AG04449 (cell line): ENCODE measurements at regions of chr9 and their contacts with region 1.

Region 1: DNA sequence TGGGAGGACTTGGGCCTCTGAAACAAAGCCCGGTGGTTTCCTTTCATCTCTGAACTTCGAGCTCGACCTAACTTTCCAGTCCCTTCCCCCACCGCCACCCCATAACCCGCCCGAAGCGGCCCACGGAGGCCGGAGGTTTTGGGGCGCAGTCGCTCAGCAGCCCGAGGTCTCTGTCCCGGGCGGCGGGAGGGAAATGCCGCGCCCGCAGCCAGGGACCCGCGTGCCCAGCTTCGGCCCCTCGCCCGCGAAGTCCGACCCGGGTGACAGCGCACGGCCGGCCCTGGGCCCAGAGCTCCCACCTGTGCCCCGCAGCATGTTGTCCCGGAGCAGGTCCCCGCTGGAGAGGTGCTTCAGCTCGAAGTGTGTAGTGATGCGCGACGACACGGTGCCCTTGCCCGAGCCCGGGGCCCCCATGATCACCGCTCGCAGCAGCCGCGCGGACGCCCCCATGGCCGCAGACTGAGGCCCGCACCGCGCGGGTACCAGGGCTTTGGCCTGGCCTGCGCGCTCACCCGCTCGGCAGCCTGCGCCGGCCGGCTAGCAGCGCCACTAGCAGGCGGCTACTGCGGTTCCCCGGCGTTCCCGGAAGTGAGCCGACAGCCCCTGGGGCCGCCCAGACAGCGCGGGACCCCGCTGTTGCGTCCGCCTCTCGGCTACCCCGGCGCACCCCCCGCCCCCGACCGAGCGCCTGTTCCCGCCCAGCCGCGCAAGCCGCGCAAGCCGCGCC is at the start of gene AK3:
- DNase-seq: peak; percentile 17
- H3K4me3 ChIP-seq: peak within 1 kb of the TSS; percentile 82
- CTCF ChIP-seq: peak; percentile 57

Region 2: DNA sequence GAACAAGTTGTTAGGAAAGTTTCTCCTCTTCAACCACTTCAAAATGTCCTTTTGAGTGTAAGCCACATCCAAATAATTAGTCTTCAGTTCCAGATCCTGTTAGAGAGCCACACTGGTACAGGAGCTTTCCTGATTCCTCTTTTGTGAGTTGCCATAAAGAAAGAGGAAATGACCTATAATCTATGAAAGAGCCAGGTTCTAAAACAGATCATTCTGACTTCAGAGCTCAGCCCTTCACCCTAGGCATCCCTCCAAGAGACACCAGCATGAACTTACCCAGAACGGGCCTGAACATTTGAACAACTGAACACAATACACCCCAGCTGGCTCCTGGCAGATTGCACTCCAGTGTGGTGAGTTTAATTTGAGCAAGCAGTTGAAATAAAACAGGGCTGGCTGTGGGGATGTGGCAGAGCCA is 224.8 kb before region 1 on chr9:
- CTCF ChIA-PET with region 1: no interaction called
- POLR2A ChIA-PET with region 1: no interaction called
- DNase-seq: no peak
- H3K4me3 ChIP-seq: no peak overlapping the region
- CTCF ChIP-seq: no peak

Region 3: DNA sequence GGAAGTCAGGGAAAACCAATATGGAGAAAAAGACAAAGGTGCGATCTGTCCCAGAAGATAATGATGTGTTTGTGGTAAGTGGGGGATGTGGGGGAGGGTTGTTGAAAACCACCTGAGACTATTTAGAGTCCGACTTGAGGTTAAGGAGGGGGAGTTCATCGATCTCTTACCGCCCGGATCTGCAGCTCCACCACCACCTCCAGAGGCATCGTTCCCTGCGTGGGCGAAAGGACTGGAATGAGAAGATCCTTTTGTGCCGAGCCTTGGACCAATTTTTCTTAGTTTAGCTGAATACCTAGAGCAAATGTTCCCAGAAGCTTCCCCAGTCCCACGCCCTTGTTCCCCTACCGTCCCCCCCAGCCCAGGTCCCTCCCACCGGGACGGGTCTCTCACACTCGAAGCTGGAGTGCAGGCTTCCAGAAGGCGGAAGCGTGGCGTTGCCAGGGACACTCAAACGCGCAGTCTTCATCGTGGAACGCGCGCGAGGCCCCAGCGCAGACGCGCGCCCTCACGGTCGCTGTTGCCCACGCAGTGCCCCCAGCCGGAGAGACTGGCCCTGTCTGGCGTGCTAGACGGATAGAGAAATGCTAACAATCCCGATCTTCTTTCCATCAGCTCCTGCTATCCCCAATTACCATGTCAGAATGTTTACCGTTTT is 74.6 kb before region 1 on chr9 and contains the start of gene SPATA6L:
- CTCF ChIA-PET with region 1: interaction called, 10 read pairs
- POLR2A ChIA-PET with region 1: no interaction called
- DNase-seq: no peak
- H3K4me3 ChIP-seq: peak within 1 kb of the TSS; percentile 60
- CTCF ChIP-seq: peak; percentile 28